ENCODE measurements at regions of chr5 and their contacts with region 1.

Region 1: GRCh38 chr5:32174011-32174870 is at the start of gene GOLPH3:
- DNase-seq: peak; percentile 86 to 98 (median 90)

Region 2: DNA sequence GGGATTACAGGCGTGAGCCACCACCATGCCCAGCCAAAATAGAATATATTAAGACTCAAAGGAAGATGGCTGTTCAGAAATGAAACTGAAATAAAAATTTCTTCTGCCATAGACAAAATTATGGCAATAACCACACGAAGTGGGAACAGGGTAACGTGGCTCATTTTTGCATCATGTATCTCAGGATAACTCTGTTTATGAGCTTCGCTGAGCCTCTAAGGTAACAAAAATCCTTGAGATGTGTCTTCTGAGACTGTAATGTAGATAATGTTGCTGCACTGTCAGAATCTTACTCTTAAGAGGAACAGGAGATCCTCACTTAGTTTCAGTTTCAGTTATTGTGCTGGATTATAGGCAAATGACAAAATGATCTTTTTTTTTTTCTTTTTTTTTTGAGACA is 154.0 kb before region 1 on chr5:
- intact Hi-C with region 1: no loop called
- DNase-seq: no peak

Region 3: DNA sequence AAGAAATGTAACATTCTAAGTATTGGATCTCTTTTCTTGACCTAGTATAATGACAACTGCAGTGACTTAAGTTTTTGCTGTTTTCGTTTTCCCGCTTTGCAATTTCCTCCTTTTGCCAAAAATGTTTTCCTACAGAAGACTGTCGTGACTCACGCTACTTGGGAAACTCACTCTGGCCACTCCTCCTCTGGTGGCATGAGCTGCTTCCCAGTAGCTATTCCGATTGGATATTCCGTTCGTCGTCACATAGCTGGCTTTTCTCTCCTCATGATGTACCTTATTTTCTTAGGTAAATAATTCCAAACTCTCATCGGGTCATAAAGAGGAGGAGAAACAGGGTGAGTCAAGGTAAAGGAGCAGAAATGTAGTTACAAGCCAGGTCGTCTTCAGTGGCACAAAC is 65.0 kb before region 1 on chr5:
- intact Hi-C with region 1: loop called (anchors 5 kb)
- DNase-seq: no peak

Region 4: DNA sequence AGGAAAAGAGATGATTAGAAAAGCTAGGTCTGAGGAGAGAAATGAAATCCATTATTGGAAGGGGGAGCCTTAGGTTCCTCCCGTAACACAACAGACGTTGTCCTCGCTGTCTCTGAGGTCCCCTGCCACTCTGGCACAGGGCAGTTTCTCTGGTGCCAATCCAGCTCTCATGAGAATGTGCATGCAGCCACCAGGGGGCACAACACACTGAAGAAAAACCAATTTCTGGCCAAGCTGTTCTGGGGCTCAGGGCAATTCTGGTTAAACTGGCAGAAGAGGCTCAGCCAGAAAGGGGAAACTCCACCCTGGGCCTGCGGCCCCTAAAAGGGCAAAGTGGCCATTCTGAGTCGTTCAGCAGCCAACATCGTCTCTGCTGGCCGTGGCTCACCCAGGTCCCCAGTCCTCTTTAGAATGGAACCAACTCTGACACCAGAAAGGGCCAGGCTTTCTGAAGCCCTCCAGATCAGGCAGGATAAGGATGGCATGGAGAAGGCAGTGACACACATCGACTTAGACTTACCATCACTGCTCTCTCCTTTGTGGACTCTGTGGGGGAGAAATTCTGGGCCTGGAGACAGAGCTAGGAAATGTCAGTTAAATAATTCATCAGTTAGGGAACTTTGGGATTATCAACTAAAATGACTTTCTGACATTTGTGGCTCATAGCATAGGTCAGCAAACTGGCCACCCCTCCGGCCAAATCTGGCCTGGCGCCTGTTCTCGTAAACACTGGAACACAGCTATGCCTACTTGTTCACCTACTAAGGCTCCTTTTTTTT is 58.4 kb after region 1 on chr5:
- intact Hi-C with region 1: loop called (anchors 5 kb)
- DNase-seq: peak; percentile 65 to 96 (median 86)

Region 5: GRCh38 chr5:32312647-32313523 is 138.6 kb after region 1 on chr5 and contains the start of gene MTMR12:
- intact Hi-C with region 1: loop called (anchors 2 kb)
- DNase-seq: peak; percentile 99 to 100 (median 99)

Region 6: GRCh38 chr5:32444431-32445286 is 270.4 kb after region 1 on chr5 and contains the start of gene ZFR:
- intact Hi-C with region 1: loop called (anchors 5 kb)
- DNase-seq: peak; percentile 88 to 99 (median 92)

Region 7: GRCh38 chr5:32664523-32664922 is 490.3 kb after region 1 on chr5:
- intact Hi-C with region 1: no loop called
- DNase-seq: no peak